ENCODE measurements at regions of chr5 and their contacts with region 1.

Region 1: DNA sequence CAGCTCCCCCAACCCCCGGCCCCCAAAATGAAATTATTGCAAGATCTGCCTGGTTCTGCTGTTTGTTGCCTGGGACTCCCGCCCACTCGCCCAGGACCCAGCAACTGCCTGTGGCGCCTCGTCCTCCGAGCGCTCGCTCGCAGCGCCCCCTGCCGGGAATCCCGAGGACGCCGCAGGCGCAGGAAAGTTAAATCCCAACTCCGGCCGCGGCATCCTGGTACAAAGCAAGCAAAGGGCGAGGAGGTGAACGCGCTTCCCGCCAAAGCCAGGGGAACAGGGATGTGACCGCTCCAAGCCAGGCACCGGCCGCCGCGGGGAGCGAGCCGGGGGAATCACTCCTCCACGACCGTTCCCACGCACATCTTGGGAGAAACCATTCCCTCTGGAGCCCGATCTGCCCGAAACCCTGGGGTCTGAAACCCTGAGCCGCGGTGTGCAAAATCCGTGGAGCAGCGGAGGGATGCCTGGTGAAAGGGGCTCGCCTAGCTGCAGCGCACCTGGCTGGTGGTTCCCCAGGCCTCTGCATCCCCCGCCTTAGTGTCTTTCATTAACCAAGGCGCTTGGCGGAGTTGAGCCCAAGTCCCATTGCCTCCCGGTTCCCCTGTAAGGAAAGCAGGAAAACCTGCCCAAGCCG is 1.3 kb downstream of the SEMA5A start:
- DNase-seq: peak; percentile 91

Region 2: DNA sequence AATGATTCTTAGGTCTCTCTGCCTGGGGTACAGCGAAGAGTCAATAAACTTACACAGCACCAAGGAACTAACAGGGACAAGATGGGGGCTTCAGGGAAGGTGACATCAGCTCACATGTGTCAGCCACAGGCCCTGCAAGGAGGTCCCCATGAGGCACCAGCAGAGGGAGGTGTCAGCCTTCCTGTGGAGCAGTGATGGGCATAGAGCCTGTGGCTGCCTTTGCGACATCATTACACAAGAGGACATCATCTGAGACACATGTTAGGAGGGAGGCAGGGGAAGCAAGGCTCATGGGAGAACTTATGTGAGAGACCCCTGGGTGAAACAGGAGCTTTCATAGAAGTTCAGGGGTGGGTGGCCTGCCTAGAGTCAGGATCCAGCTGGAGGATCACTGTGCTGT is 388.3 kb before region 1 on chr5:
- intact Hi-C with region 1: loop called (anchors 10 kb)
- DNase-seq: no peak

Region 3: DNA sequence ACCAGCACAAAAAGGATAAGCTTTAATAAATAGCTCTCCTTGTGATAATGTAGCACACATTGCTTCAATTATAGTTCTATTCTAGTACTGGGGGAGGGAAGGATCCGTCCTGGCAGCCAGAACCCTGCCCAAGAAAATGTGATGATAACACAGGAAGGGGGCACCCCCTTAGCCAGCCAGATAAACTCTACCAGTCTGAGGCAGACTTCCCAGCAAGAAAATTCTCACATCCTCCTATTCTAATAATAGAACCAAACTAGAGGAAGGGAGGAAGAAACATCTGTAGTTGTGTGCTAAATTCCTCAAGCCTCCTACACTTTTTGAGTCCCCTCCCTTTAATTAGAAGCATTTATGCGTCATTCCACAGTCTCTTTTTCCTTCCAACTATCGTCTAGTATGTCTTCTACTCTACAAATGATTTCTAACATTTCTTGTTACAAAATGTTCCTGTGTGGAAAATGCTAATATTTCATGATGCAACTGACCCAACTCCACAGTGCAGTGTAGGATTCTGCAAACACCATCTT is 259.8 kb before region 1 on chr5:
- intact Hi-C with region 1: loop called (anchors 2 kb)
- DNase-seq: no peak

Region 4: GRCh38 chr5:9361835-9362234 is 182.8 kb before region 1 on chr5:
- intact Hi-C with region 1: loop called (anchors 2 kb)
- DNase-seq: no peak

Region 5: GRCh38 chr5:9502050-9502834 is 42.4 kb before region 1 on chr5:
- intact Hi-C with region 1: loop called (anchors 5 kb)
- DNase-seq: no peak

Region 6: GRCh38 chr5:9513827-9514226 is 30.8 kb before region 1 on chr5:
- intact Hi-C with region 1: loop called (anchors 2 kb)
- DNase-seq: no peak

Region 7: GRCh38 chr5:9617221-9617620 is 72.6 kb after region 1 on chr5:
- intact Hi-C with region 1: loop called (anchors 5 kb)
- DNase-seq: no peak

Region 8: DNA sequence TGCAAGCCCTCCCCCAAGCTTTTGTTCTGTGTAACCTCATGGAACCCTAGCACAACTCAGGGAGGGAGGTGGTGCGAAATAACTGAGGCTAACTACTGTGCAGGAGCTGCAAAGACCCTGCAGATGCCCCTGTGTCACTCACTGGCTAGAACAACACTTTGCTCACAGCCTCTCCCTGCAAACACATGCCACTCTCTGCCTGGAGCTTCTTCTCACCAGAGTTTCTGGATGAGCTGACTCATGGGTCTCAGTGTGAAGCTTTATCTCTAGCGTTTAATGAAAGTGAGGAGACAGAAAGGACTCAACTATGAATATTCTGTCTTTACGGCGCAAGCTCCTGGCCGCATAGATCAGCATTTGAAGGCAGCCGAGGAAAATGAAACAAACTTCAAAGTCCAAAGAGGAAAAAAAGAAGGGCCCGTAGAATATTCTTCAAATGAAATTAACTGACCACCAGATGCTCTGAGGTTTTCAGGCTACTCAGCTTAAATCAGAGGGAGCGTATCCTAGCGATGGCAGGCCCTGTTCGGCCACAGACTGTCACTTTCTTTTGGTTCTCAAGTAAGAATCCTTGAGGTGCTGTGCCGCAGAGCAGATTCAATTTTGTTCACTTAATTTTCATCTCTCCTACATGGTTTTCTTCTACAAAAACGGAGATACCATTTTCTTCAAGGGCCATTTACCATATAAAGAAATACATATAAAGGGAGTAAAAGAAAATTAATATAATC is 163.3 kb after region 1 on chr5:
- intact Hi-C with region 1: no loop called
- DNase-seq: no peak

Measured in cardiac septum (tissue), 1 donor.